ENCODE measurements at regions of chr13 and their contacts with region 1.

Region 1: DNA sequence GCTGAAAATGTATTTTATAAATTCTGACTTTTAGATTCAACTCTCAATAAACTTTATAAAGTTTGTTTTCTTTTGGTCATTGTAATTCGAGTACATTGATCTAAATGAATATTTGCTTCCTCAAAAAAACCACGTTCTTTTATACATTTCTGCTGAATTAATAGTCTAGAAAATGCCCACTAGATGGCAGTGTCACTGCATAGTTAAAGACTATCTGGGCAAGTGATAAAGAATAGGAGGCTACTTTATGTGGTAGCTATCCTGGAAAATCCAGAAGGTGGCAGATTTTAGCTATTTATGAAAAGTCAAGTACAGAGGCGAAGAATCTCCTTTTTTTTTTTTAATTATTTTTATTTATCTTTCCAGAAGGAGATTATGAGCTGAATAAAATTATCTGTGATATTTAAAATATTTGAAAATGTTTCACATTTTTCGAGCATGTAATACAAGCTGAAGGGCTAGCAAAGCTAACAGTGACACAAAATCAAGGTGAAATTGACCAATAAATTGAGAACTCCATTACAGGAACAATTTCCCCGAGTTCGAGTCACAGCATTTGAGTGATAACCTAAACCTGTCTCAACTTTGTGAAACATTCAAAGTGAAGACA is 221.8 kb downstream of the OLFM4 start:
- DNase-seq: peak; percentile 28
- ATAC-seq: peak; percentile 82
- H3K4me3 ChIP-seq: no peak overlapping the region
- H3K27ac ChIP-seq: no peak overlapping the region
- H3K4me1 ChIP-seq: no peaks in the 10 kb centered on the region
- H3K27me3 ChIP-seq: no peaks in the 10 kb centered on the region
- CTCF ChIP-seq: peak; percentile 69; the same call in 1 of the 2 replicates

Region 2: DNA sequence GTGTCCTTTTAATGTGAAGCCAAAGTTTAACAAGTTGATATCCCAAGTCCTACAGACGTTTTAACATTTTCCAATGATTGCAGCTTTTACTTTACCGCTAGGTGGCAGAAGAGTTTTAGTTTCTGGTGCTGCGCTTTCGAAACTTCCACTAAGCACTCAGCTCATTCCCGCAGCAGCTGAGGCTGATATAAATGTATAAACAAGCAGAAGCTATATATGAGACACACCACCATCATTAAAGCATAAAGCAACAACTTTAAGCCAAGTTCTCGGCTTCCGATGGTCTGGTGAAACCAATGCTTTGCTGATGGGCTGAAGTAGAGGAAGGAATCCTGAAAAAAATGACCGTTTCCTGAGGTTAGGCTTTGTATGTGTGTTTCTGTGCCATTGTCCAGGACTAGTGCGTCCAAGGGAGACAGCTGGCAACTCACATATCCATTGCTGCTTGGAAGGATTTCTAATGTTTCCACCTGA is 532.2 kb after region 1 on chr13:
- CTCF ChIA-PET with region 1: interaction called, 9 read pairs
- POLR2A ChIA-PET with region 1: interaction called, 3 read pairs
- in situ Hi-C with region 1: no loop called
- intact Hi-C with region 1: loop called (anchors 5 kb)
- DNase-seq: peak; percentile 12
- ATAC-seq: peak; percentile 75
- H3K4me3 ChIP-seq: no peak overlapping the region
- H3K27ac ChIP-seq: no peak overlapping the region
- H3K4me1 ChIP-seq: no peaks in the 10 kb centered on the region
- H3K27me3 ChIP-seq: no peaks in the 10 kb centered on the region
- CTCF ChIP-seq: peak; percentile 69